Activated CD4-positive, alpha-beta memory T cell treated with anti-CD3 and anti-CD28 coated beads, Interleukin-2, amount 10 ng/mL, durations not matched to agents 7 days and 5 days (primary cell): ENCODE measurements at regions of chr14 and their contacts with region 1.

Region 1: DNA sequence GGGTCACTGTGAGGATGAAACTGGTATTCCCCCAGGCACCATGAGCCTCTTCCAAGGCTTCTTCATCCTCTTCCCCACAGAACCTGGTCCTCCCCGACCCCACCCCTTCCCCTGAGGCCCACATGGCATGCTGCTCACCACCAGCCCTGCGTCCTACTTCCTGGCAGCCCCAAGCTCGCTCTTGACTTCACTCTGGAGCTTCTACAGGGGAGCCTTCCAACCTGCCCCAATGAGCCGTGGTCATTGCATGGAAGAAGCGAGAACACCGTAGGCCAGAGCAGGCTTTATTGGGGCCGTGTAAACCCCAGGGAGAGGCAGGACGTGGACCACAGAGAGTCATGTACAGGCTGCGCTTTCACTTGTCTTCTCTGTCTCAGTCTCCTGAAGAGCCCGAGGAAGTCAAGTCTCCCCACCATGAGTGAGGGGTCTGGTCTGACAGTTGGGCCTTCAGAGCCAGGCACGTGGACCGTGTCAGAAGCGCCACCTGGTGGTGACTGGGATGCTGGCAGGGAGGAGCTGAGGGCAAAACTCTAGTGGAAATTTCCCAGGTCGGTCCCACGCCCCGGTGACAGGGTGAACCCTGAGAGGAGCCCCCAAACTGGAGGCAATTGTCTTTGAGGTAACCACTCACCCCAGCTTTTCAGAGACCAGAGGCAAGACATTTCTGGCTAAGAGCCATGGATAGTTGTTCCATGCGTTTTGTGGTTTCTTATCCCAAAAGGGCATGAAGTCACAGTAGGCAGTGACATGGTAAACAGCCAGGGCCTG is 17.5 kb downstream of the RPS6KL1 start:
- DNase-seq: peak; percentile 76
- H3K4me3 Mint-ChIP-seq: no peak overlapping the region
- H3K27ac Mint-ChIP-seq: no peak overlapping the region
- H3K4me1 Mint-ChIP-seq: peaks cover 3% of the 10 kb centered on the region
- H3K27me3 Mint-ChIP-seq: no peaks in the 10 kb centered on the region

Region 2: DNA sequence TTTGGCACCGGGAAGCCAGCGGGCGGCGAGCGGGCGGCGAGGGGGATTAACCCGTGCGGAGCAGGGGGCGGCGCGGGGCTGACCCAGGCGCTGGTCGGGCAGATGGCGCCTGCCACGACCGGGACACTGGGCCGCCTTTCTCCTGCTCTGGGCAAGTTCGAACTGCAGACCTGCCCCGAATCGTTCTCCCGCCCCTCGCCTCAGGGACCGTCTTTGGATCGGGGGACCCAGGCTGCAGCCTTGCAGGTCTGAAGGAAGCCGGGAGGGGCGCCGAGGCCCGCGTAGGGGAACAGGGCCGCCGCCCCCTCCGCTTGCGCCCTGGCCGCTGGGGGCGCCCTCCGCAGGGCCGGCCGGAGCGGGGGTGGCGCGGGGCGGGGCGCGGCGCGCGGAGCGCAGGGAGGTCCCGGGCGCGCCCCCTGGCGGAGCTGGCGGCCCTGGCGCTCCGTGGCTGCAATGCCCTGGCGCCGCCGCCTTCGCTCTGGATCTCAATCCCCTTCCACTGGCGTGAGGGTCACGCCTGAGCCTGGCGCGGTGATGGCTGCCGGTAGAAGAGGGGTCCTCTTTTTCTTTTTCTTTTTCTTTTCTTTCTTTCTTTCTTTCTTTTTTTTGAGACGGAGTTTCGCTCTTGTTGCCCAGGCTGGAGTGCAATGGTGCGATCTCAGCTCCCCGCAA is 293.1 kb before region 1 on chr14:
- CTCF ChIA-PET with region 1: interaction called, 14 read pairs
- POLR2A ChIA-PET with region 1: interaction called, 7 read pairs
- DNase-seq: peak; percentile 84
- H3K4me3 Mint-ChIP-seq: peak overlapping the region; percentile 63
- H3K27ac Mint-ChIP-seq: no peak overlapping the region
- H3K4me1 Mint-ChIP-seq: peaks cover 34% of the 10 kb centered on the region
- H3K27me3 Mint-ChIP-seq: peaks cover 58% of the 10 kb centered on the region

Region 3: GRCh38 chr14:74756326-74756725 is 149.2 kb before region 1 on chr14:
- CTCF ChIA-PET with region 1: no interaction called
- POLR2A ChIA-PET with region 1: no interaction called
- DNase-seq: no peak
- H3K4me3 Mint-ChIP-seq: no peak overlapping the region
- H3K27ac Mint-ChIP-seq: no peak overlapping the region
- H3K4me1 Mint-ChIP-seq: no peaks in the 10 kb centered on the region
- H3K27me3 Mint-ChIP-seq: no peaks in the 10 kb centered on the region

Region 4: DNA sequence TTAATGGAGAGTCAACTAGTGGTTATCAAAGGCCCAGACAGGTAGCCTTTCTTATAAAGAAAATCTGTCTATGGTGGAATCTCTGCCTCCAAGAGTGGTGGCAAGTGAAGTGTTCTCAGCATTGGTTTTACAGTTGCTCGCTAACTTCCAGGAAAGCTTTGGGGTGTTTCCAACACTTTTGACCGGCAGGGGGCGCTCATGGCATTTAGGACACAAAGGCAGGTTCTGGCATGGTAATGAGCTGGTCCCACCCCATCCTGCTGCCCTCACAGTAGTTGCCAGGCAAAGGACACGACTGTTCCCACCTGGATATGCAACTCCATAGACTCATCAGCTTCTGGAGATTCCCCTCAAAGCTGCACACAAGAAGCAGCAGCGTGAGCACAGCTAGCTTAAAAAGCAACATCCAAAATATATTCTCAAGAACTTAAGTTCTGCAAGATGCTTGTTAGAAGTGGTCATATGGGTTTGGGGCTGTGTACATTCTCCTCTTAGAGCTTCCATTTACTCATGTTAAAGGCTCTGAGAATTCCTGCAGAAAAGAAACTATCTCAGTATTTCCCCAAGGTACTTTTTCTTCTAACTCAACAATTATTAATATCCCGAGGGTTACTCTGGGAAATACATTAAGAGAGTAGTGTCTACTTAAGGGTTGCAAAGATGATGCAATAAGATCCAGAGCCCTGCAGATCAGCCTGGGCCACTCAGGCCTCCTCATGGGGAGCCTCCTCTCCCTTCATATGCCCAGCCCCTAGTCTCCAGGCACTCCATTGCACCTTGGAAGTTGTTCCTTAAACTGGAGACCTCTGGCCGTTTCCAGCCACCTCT is 44.4 kb before region 1 on chr14:
- CTCF ChIA-PET with region 1: interaction called, 285 read pairs
- POLR2A ChIA-PET with region 1: interaction called, 45 read pairs
- DNase-seq: peak; percentile 91
- H3K4me3 Mint-ChIP-seq: no peak overlapping the region
- H3K27ac Mint-ChIP-seq: no peak overlapping the region
- H3K4me1 Mint-ChIP-seq: peaks cover under 1% of the 10 kb centered on the region
- H3K27me3 Mint-ChIP-seq: no peaks in the 10 kb centered on the region

Region 5: DNA sequence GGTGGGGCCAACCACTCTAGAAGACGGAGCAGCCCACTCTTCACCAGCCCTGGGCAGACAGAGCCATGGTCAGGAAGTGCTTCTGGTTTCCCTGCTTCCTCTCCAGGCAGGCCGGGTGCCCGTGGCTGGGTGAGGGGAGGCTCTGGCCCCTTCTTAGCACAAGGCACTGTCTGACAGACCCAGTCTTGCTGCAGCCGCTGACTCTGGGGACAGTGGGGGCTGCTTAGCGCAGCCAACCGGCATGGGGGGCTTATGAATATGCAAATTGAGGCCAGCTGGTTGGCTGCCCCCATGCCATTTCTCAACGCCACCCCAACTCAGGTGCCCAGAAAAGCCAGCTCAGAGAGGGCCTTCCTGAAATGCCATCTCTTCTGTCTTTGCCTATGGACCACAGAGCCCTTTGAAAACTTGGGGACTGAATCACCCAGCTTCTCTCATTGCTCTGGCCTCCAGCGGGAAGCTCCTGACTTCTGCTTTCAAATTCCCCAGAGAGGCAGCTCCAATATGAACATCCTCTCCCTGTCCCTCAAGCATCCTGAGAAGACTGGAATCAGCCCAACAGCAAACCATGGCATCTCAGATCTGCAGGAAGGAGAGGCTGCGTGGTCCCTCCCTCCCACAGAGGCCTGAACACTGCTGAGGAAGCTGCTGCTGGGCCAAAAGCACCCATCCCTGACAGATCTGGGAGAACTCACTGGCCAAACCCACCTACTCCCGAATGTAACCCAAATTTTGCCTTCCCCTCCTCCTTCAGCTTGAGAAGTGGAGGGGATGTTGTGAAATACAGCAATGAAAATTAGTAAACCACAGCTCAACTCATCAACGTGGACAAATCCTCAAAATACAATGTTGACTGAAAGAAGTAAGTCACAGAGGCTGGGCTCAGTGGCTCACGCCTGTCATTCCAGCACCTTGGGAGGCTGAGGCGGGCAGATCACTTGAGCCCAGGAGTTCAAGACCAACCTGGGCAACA is 29.3 kb before region 1 on chr14 and contains the start of gene PROX2:
- CTCF ChIA-PET with region 1: interaction called, 44 read pairs
- POLR2A ChIA-PET with region 1: interaction called, 34 read pairs
- DNase-seq: peak; percentile 24
- H3K4me3 Mint-ChIP-seq: no peak within 1 kb of the TSS
- H3K27ac Mint-ChIP-seq: peak within 1 kb of the TSS; percentile 7
- H3K4me1 Mint-ChIP-seq: peaks cover 32% of the 10 kb centered on the region
- H3K27me3 Mint-ChIP-seq: no peaks in the 10 kb centered on the region
- total RNA-seq, gene PROX2: not detected

Region 6: GRCh38 chr14:74893614-74894091 is 11.9 kb before region 1 on chr14:
- CTCF ChIA-PET with region 1: interaction called, 86 read pairs
- POLR2A ChIA-PET with region 1: interaction called, 4 read pairs
- DNase-seq: no peak
- H3K4me3 Mint-ChIP-seq: no peak overlapping the region
- H3K27ac Mint-ChIP-seq: no peak overlapping the region
- H3K4me1 Mint-ChIP-seq: peaks cover 8% of the 10 kb centered on the region
- H3K27me3 Mint-ChIP-seq: no peaks in the 10 kb centered on the region

Region 7: GRCh38 chr14:74945823-74946682 is 40.5 kb after region 1 on chr14:
- CTCF ChIA-PET with region 1: interaction called, 12 read pairs
- POLR2A ChIA-PET with region 1: no interaction called
- DNase-seq: peak; percentile 79
- H3K4me3 Mint-ChIP-seq: peak overlapping the region; percentile 2
- H3K27ac Mint-ChIP-seq: no peak overlapping the region
- H3K4me1 Mint-ChIP-seq: peaks cover 33% of the 10 kb centered on the region
- H3K27me3 Mint-ChIP-seq: no peaks in the 10 kb centered on the region